Cardiac septum (tissue), 1 donor: ENCODE measurements at regions of chr7 and their contacts with region 1.

Region 1: GRCh38 chr7:70614237-70615045 is 517.5 kb upstream of the GALNT17 start:
- DNase-seq: peak; percentile 81

Region 2: DNA sequence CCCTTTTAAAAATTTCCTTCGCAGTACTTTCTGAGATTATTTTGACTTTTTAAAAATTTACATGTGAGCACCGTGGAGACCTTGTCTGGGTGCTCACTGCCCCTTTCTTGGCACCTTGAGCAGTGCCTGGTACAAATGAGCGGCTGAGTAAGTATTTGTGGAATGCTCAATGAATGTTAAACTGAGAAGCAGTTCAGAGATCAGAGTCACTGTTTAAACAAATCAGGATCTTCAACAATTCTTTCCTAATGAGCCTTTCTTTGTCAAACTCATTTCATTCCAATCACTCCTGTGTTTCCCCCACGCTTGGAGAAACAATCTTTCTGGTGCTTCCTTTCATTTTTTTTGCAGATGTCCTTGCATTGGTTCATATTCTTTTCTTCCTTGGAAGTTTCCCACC is 93.8 kb before region 1 on chr7:
- intact Hi-C with region 1: no loop called
- DNase-seq: no peak

Region 3: GRCh38 chr7:70668606-70669358 is 54.3 kb after region 1 on chr7:
- intact Hi-C with region 1: loop called (anchors 2 kb)
- DNase-seq: no peak